ENCODE measurements at regions of chr10 and their contacts with region 1.

Region 1: GRCh38 chr10:35355971-35356724 is 19.8 kb downstream of the CCNY start:
- DNase-seq: no peak
- ATAC-seq: no peak
- H3K4me3 ChIP-seq: no peak overlapping the region
- H3K27ac ChIP-seq: no peak overlapping the region
- H3K4me1 ChIP-seq: peaks cover 32 to 36% of the 10 kb centered on the region in 2 donors
- H3K27me3 ChIP-seq: no peaks in the 10 kb centered on the region
- CTCF ChIP-seq: no peak
- POLR2A ChIP-seq: no peak

Region 2: DNA sequence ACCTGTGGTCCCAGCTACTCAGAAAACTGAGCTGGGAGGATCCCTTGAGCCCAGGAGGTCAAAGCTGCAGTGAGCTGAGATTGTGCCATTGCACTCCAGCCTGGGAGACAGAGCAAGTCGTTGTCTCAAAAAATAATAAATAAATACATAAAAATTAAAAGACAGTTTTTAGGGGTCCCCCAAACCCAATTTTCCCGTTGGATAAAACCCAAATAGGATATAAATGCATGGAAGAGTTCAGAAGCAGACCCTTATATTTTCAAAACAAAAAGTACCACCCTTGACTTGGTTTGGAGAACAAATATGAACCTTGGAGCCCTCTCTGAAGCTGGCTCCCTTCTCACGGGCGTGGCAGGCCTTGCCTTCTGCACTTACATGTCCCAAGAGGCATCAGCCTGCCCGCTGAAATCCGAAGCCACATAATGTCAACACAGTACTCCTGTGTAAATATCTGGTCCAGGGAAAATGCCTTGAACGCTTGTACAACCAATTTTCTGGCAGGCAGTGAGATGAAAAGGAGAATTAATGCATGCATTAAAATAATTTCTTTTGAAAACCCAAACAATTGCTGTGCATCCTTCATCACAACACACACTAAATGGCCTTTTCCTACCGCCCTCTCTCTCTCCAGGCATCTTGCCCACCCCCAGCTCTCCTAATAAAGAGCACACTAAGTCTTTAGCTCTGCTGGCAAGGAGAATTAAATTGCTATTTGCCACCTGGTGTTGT is 494.7 kb before region 1 on chr10:
- in situ Hi-C with region 1: no loop called
- intact Hi-C with region 1: no loop called
- DNase-seq: peak; percentile 78
- ATAC-seq: peak; percentile 94 to 98
- H3K4me3 ChIP-seq: peak overlapping the region in 3 of 4 donors; percentile 15 to 29 (median 28)
- H3K27ac ChIP-seq: peak overlapping the region; percentile 20 to 73 (median 64)
- H3K4me1 ChIP-seq: peaks cover 14 to 29% of the 10 kb centered on the region in 2 donors
- H3K27me3 ChIP-seq: no peaks in the 10 kb centered on the region
- CTCF ChIP-seq: no peak
- POLR2A ChIP-seq: no peak

Region 3: GRCh38 chr10:35387768-35388167 is 31.6 kb after region 1 on chr10:
- in situ Hi-C with region 1: no loop called
- intact Hi-C with region 1: loop called (anchors 1 kb)
- DNase-seq: no peak
- ATAC-seq: peak in 1 of 2 donors; percentile 53
- H3K4me3 ChIP-seq: no peak overlapping the region
- H3K27ac ChIP-seq: peak overlapping the region; percentile 54 to 75 (median 70)
- H3K4me1 ChIP-seq: peaks cover 47 to 52% of the 10 kb centered on the region in 2 donors
- H3K27me3 ChIP-seq: no peaks in the 10 kb centered on the region
- CTCF ChIP-seq: no peak
- POLR2A ChIP-seq: no peak

Measured in gastrocnemius medialis (tissue), 4 donors.